Posterior vena cava (tissue), 2 donors: ENCODE measurements at regions of chr1 and their contacts with region 1.

Region 1: DNA sequence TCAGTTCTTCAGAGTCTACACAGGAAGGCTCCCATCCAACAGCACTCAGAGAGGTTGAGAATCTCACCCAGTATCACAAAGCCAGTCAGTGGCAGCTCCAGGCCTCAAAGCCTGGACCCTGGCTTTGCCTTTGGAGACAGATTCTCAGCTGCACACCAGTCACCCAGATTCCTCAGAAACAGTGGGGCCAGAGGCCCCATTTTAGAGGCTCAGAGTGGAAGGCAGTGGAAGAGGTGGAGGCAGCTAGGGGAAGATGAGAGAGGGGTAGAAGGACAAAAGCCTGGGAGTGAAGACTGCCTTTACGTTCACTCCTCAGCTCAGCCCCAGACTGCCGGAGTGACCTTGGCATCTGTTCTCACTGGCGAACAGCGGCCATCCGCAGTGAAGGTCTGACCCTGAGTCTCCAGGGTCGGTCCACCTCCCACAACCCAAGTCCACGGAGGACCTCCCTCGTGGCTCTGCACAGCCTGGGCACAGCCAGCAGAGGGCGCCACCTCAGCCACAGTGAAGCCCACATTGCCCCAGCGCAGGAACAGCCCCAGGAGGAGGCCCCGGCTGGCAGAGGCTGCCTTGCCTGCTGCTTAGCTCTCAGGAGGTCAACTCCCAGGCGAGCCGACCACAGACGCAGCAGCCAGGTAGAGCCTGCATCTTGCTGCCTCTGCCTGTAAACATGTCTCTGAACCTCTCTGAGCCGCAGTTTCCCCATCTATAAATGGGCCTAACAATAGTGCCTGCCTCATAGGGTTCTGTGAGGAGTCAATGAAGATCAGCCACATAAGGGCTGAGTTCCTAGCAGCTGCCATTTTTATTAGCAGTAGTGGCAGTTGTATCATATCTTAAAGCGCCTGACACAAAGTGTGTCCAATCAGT is 5.9 kb upstream of the FNDC5 start:
- DNase-seq: peak; percentile 82

Region 2: GRCh38 chr1:32221980-32222755 is 654.4 kb before region 1 on chr1 and contains the starts of genes EIF3I and TMEM234:
- intact Hi-C with region 1: no loop called
- DNase-seq: peak; percentile 98
- total RNA-seq, gene EIF3I: 117 to 131 TPM
- total RNA-seq, gene TMEM234: 12.7 to 15.9 TPM

Region 3: GRCh38 chr1:32919811-32920733 is 43.5 kb after region 1 on chr1:
- intact Hi-C with region 1: no loop called
- DNase-seq: no peak

Region 4: GRCh38 chr1:33094971-33095604 is 218.5 kb after region 1 on chr1:
- intact Hi-C with region 1: loop called in 1 of 2 experiments (anchors 5 kb)
- DNase-seq: no peak